K562 (cell line): ENCODE measurements at regions of chr7 and their contacts with region 1.

Region 1: GRCh38 chr7:142873281-142873787 is 12.2 kb downstream of the TRPV6 start:
- DNase-seq: peak; percentile 72 to 93 (median 88)
- ATAC-seq: peak; percentile 92
- H3K4me3 ChIP-seq: no peak overlapping the region
- H3K27ac ChIP-seq: no peak overlapping the region
- H3K4me1 ChIP-seq: peaks cover 0 to 10% of the 10 kb centered on the region in 2 experiments; a peak in 1 of 5 replicates
- H3K27me3 ChIP-seq: peaks cover 12 to 72% of the 10 kb centered on the region in 2 experiments
- CTCF ChIP-seq: peak; percentile 89 to 96 (median 94)
- EP300 ChIP-seq: no peak
- POLR2A ChIP-seq: no peak
- RAD21 ChIP-seq: peak; percentile 53 to 79

Region 2: DNA sequence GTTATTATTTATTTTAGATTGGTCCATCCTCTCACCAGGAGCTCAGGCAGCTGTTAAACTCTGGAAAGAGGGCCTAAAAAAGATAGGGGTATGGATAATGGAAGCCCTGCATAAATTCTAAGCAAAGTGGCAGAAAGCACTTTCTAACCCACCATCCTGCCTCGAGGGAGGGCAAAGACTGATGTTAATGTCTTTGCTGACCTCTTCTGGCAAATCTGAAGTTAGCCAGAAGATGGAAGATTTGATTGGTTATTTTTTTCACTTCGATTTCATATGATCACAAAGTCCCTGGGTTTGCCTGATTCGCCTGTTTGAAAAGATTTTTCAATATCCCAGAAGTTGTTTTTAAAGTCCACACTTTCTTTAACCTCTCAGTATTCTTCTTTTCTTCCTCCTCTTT is 128.8 kb after region 1 on chr7:
- CTCF ChIA-PET with region 1: interaction called, 31 read pairs
- POLR2A ChIA-PET with region 1: interaction called, 4 read pairs
- in situ Hi-C with region 1: loop called (anchors 5 kb)
- intact Hi-C with region 1: loop called (anchors 1 kb)
- DNase-seq: peak in 2 of 4 experiments; percentile 56 to 63
- ATAC-seq: peak; percentile 78
- H3K4me3 ChIP-seq: no peak overlapping the region
- H3K27ac ChIP-seq: no peak overlapping the region
- H3K4me1 ChIP-seq: peaks cover 0 to 4% of the 10 kb centered on the region in 2 experiments; a peak in 2 of 5 replicates
- H3K27me3 ChIP-seq: peaks cover 5 to 6% of the 10 kb centered on the region in 2 experiments; a peak in 4 of 5 replicates
- CTCF ChIP-seq: peak; percentile 69 to 91 (median 77)
- EP300 ChIP-seq: no peak
- POLR2A ChIP-seq: no peak
- RAD21 ChIP-seq: peak; percentile 87 to 90